Mucosa of descending colon (tissue), 3 donors: ENCODE measurements at regions of chr6 and their contacts with region 1.

Region 1: GRCh38 chr6:53492860-53493634 is 51.9 kb downstream of the GCLC start:
- DNase-seq: no peak
- ATAC-seq: peak; percentile 63
- H3K4me3 ChIP-seq: no peak overlapping the region
- H3K4me1 ChIP-seq: peaks cover 10% of the 10 kb centered on the region
- CTCF ChIP-seq: peak; percentile 56

Region 2: DNA sequence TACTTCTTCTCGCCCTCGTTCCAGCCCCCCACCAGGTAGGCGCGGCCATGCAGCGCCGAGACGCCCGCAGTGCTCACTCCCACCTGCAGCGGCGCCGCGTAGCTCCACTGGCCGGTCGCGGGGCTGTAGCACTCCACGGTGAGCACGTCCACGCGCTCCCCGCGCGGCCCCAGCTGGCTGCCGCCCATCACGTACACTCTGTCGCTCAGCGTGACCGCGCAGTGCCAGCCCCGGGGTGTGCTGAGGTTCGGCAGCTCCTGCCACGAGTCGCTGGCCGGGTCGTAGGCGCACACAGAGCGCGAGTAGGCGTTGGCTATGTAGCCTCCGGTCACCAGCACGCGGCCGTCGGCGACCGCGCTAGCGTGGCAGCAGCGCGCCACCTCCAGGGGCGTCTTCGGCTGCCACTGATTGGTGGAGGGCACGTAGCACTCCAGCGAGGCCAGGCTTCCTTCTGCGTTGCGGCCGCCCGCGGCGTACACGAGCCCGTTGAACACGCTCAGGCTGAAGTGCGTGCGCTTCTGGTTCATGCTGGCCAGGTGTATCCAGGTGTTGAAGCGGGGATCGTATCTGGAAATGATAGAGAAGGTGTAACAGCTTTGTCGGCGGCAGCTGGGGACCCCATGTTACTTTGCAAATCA is 158.8 kb after region 1 on chr6:
- intact Hi-C with region 1: loop called (anchors 5 to 10 kb)
- DNase-seq: peak; percentile 85 to 92 (median 92)
- ATAC-seq: peak; percentile 98
- H3K4me3 ChIP-seq: peak overlapping the region; percentile 37
- H3K4me1 ChIP-seq: peaks cover 7% of the 10 kb centered on the region
- CTCF ChIP-seq: peak; percentile 11

Region 3: DNA sequence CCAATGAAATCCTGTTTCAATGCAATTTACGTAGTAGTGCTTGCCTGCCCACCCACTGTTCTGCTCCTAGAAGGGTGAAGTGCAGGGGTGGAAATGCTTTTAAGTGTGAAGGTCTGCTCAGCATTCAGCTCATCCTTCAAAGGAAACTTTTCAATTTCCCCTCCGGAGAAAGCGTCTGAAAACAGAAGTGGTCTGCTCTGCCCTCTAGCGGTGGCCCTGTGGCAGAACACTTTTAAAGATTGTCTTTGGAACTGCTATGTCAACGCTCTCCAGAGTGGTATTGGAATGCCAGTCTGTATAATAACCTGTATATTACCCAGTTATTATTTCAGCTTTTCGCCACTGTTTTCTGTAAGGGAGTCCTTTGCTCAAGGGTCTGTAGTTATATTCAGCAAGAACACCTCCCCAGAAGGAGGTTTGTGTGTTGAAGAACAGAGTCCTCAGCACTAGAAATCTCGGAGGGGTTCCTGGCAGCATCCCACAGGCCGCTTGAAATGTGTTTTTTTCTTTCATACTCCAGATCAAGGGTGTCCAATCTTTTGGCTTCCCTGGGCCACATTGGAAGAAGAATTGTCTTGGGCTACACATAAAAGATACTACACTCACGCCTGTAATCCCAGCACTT is 235.6 kb after region 1 on chr6:
- intact Hi-C with region 1: loop called (anchors 2 to 5 kb)
- DNase-seq: peak in 2 of 3 donors; percentile 45 to 49
- ATAC-seq: peak; percentile 76
- H3K4me3 ChIP-seq: no peak overlapping the region
- H3K4me1 ChIP-seq: peaks cover 6% of the 10 kb centered on the region
- CTCF ChIP-seq: peak; percentile 68

Region 4: DNA sequence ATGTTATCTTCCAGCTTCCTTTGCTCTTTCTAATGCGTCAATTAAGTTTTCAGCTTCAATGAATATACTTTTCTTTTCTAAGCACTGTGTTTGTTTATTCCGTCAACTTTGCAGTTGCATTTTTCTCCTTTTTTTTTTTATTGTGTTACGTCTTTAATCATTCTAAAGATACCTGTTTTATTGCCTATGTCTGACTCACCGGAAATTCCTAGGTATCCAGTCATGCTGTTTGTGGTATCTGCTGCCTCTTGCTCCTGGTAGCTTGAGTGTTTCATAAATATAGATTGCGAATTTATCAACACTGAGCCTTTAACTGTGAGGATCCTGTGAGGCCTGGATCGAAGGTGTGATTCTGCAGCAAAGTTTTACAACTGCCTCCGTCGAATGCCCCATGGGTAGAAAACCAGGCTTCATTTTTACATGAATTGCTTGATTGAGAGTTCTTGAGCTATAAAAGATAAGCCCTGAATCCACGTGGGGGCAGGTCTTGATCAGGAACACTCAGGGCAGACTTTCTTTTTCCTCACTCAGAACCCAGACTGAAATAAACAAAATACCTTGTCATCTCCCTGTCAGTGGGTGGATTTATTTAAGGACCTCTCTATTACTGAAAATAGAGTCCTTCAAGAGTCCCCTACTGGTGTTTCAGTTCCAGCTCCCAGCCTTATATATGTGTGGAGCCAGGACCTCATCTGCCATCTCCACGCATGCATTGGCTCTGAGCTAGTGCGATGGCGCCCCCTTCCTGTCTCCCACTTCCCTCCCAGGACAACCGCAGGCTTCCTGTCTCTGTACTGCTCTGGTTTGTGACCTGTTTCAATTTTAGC is 241.6 kb after region 1 on chr6:
- intact Hi-C with region 1: loop called (anchors 2 to 5 kb)
- DNase-seq: peak; percentile 64 to 82 (median 76)
- ATAC-seq: peak; percentile 88
- H3K4me3 ChIP-seq: no peak overlapping the region
- H3K4me1 ChIP-seq: no peaks in the 10 kb centered on the region
- CTCF ChIP-seq: no peak